ENCODE measurements at regions of chr6 and their contacts with region 1.

Region 1: GRCh38 chr6:33683051-33683571 is 28.4 kb downstream of the UQCC2 start:
- DNase-seq: no peak
- H3K27ac ChIP-seq: peak overlapping the region; percentile 46
- CTCF ChIP-seq: no peak

Region 2: GRCh38 chr6:35511562-35511941 is 1828.4 kb after region 1 on chr6:
- CTCF ChIA-PET with region 1: interaction called, 11 read pairs
- POLR2A ChIA-PET with region 1: no interaction called
- DNase-seq: no peak
- H3K27ac ChIP-seq: no peak overlapping the region
- CTCF ChIP-seq: no peak

Measured in RWPE1 (cell line).